Endothelial cell of umbilical vein (primary cell): ENCODE measurements at regions of chr6 and their contacts with region 1.

Region 1: DNA sequence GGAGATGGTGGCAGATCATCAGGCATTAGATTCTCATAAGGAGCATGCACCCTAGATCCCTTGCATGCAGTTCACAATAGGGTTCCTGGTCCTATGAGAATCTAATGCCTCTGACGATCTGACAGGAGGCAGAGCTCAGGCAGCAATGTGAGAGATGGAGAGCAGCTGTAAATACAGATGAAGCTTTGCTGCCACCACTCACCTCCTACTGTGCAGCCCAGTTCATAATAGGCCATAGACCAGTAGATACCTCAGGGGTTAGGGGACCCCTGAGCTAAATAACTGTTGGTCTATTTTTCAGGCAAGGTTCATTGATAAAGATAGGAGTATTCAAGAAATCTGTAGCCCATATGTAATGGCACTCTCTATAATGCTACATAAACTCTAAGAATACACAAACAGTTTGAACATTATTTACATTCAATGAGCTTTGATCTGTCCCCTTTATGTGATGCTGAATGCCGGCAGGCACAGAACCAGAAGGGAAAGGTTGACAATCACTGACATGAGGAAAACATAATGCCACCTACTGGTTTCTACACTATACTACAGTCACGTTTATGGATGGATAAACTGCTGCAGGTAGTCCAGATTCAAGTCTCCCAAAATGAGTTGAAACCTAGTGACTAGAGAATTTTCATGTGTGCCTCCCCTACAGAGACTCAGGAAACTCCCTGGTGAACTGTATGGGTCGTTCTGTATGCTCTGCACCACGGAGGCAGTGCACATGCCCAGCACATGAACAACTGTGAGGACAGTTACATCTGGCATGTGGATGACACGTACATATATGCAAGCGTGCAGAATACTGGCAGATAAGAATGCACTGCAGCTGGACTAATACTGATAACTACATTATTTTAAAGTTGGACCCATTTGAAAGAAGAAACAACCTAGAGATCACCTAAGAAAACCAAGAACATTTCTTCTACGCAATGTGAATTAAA is 72.0 kb downstream of the DST start:
- DNase-seq: peak; percentile 52
- H3K4me3 ChIP-seq: no peak overlapping the region
- H3K27ac ChIP-seq: no peak overlapping the region
- H3K4me1 ChIP-seq: no peaks in the 10 kb centered on the region
- H3K27me3 ChIP-seq: no peaks in the 10 kb centered on the region
- CTCF ChIP-seq: peak; percentile 44 to 51
- POLR2A ChIP-seq: no peak

Region 2: GRCh38 chr6:56314683-56315523 is 255.8 kb before region 1 on chr6:
- CTCF ChIA-PET with region 1: interaction called, 17 read pairs
- POLR2A ChIA-PET with region 1: no interaction called
- dilution Hi-C with region 1: no loop called
- intact Hi-C with region 1: no loop called
- DNase-seq: peak; percentile 72
- H3K4me3 ChIP-seq: no peak overlapping the region
- H3K27ac ChIP-seq: no peak overlapping the region
- H3K4me1 ChIP-seq: no peaks in the 10 kb centered on the region
- H3K27me3 ChIP-seq: no peaks in the 10 kb centered on the region
- CTCF ChIP-seq: peak; percentile 62 to 67
- POLR2A ChIP-seq: no peak

Region 3: GRCh38 chr6:56364827-56365313 is 205.8 kb before region 1 on chr6:
- CTCF ChIA-PET with region 1: interaction called, 41 read pairs
- POLR2A ChIA-PET with region 1: no interaction called
- dilution Hi-C with region 1: no loop called
- intact Hi-C with region 1: no loop called
- DNase-seq: peak; percentile 48
- H3K4me3 ChIP-seq: no peak overlapping the region
- H3K27ac ChIP-seq: peak overlapping the region; percentile 16
- H3K4me1 ChIP-seq: peaks cover 76% of the 10 kb centered on the region
- H3K27me3 ChIP-seq: no peaks in the 10 kb centered on the region
- CTCF ChIP-seq: no peak
- POLR2A ChIP-seq: no peak

Region 4: GRCh38 chr6:56542364-56543331 is 28.0 kb before region 1 on chr6:
- CTCF ChIA-PET with region 1: interaction called, 26 read pairs
- POLR2A ChIA-PET with region 1: no interaction called
- dilution Hi-C with region 1: no loop called
- intact Hi-C with region 1: no loop called
- DNase-seq: peak; percentile 97
- H3K4me3 ChIP-seq: peak overlapping the region; percentile 41 to 84 (median 66)
- H3K27ac ChIP-seq: peak overlapping the region; percentile 80
- H3K4me1 ChIP-seq: peaks cover 41% of the 10 kb centered on the region
- H3K27me3 ChIP-seq: no peaks in the 10 kb centered on the region
- CTCF ChIP-seq: peak in 1 of 2 donors; percentile 22
- POLR2A ChIP-seq: peak; percentile 82

Region 5: GRCh38 chr6:56555438-56555872 is 15.2 kb before region 1 on chr6:
- CTCF ChIA-PET with region 1: interaction called, 10 read pairs
- POLR2A ChIA-PET with region 1: no interaction called
- dilution Hi-C with region 1: no loop called
- intact Hi-C with region 1: no loop called
- DNase-seq: no peak
- H3K4me3 ChIP-seq: no peak overlapping the region
- H3K27ac ChIP-seq: no peak overlapping the region
- H3K4me1 ChIP-seq: no peaks in the 10 kb centered on the region
- H3K27me3 ChIP-seq: no peaks in the 10 kb centered on the region
- CTCF ChIP-seq: no peak
- POLR2A ChIP-seq: no peak